ENCODE measurements at regions of chr17 and their contacts with region 1.

Region 1: DNA sequence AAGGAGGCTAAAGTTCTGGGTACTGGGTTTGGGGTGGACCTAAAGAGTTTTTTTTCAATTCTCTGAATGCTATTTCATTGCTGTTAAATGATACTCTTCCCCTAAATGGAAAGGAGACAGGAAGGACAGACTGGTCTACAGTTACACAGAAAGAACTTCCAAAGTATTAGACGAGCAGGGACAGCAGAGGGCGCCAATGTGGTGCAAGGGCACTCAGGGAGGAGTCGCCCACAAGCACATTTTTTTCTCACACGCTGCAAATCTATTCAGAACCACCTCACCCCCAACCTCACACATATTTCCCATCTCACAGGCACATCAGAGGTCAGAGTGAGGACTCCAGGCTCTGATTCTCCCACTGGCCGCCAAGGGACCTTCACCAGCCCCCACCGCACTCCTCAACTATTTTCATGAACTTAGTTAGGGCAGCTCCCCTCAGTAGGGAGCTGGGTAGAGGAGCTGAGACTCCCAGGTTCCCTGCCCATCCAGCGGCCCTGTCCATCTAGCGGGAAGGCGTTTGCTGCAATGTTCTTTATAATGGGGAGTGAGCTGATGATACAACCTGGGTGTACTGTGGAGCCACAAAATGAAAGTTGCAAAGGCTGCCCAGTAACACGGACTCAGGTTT is 6.8 kb upstream of the CA4 start:
- DNase-seq: peak; percentile 74
- CTCF ChIP-seq: peak; percentile 83

Region 2: GRCh38 chr17:60127068-60128054 is 15.6 kb before region 1 on chr17:
- CTCF ChIA-PET with region 1: interaction called, 15 read pairs
- POLR2A ChIA-PET with region 1: no interaction called
- DNase-seq: no peak
- CTCF ChIP-seq: no peak

Region 3: GRCh38 chr17:60390186-60390585 is 247.2 kb after region 1 on chr17:
- CTCF ChIA-PET with region 1: no interaction called
- POLR2A ChIA-PET with region 1: no interaction called
- DNase-seq: no peak
- CTCF ChIP-seq: no peak